Transverse colon (tissue), 4 donors: ENCODE measurements at regions of chr3 and their contacts with region 1.

Region 1: GRCh38 chr3:126679318-126679751 is 24.4 kb upstream of the TXNRD3 start:
- DNase-seq: peak; percentile 83
- H3K4me3 ChIP-seq: no peak overlapping the region
- H3K27ac ChIP-seq: no peak overlapping the region
- H3K4me1 ChIP-seq: peaks cover 0 to 7% (median 5%) of the 10 kb centered on the region in 4 donors
- H3K27me3 ChIP-seq: peaks cover 24% of the 10 kb centered on the region
- CTCF ChIP-seq: peak; percentile 88 to 99 (median 98)
- EP300 ChIP-seq: no peak
- POLR2A ChIP-seq: no peak

Region 2: GRCh38 chr3:126567696-126568438 is 111.5 kb before region 1 on chr3:
- in situ Hi-C with region 1: no loop called
- intact Hi-C with region 1: no loop called
- DNase-seq: no peak
- H3K4me3 ChIP-seq: no peak overlapping the region
- H3K27ac ChIP-seq: no peak overlapping the region
- H3K4me1 ChIP-seq: no peaks in the 10 kb centered on the region
- H3K27me3 ChIP-seq: peaks cover 5% of the 10 kb centered on the region
- CTCF ChIP-seq: no peak
- EP300 ChIP-seq: no peak
- POLR2A ChIP-seq: no peak

Region 3: GRCh38 chr3:127455541-127456450 is 776.5 kb after region 1 on chr3:
- in situ Hi-C with region 1: loop called in 2 of 4 experiments (anchors 25 kb)
- intact Hi-C with region 1: loop called (anchors 5 kb)
- DNase-seq: peak; percentile 66
- H3K4me3 ChIP-seq: peak overlapping the region in 2 of 4 donors; percentile 10 to 33
- H3K27ac ChIP-seq: no peak overlapping the region
- H3K4me1 ChIP-seq: peaks cover 9 to 24% (median 23%) of the 10 kb centered on the region in 4 donors
- H3K27me3 ChIP-seq: peaks cover 64% of the 10 kb centered on the region
- CTCF ChIP-seq: peak; percentile 63 to 89 (median 87)
- EP300 ChIP-seq: no peak
- POLR2A ChIP-seq: no peak

Region 4: GRCh38 chr3:127544192-127544802 is 865.0 kb after region 1 on chr3:
- in situ Hi-C with region 1: loop called in 2 of 4 experiments (anchors 10 to 25 kb)
- intact Hi-C with region 1: loop called (anchors 2 kb)
- DNase-seq: peak; percentile 82
- H3K4me3 ChIP-seq: no peak overlapping the region
- H3K27ac ChIP-seq: no peak overlapping the region
- H3K4me1 ChIP-seq: peaks cover 0 to 27% (median 16%) of the 10 kb centered on the region in 4 donors
- H3K27me3 ChIP-seq: no peaks in the 10 kb centered on the region
- CTCF ChIP-seq: peak; percentile 62 to 86 (median 81)
- EP300 ChIP-seq: no peak
- POLR2A ChIP-seq: no peak